K562 (cell line): ENCODE measurements at regions of chr6 and their contacts with region 1.

Region 1: GRCh38 chr6:30678964-30679726 is 6.3 kb upstream of the DHX16 start:
- DNase-seq: peak; percentile 81 to 95 (median 87)
- ATAC-seq: peak; percentile 79
- H3K4me3 ChIP-seq: peak overlapping the region; percentile 1; the same call in 1 of the 2 replicates
- H3K27ac ChIP-seq: no peak overlapping the region
- H3K4me1 ChIP-seq: peaks cover 29 to 48% of the 10 kb centered on the region in 2 experiments
- H3K27me3 ChIP-seq: no peaks in the 10 kb centered on the region
- CTCF ChIP-seq: peak; percentile 97 to 99 (median 98)
- EP300 ChIP-seq: peak; percentile 30; the same call in 1 of the 2 replicates
- POLR2A ChIP-seq: no peak
- RAD21 ChIP-seq: peak; percentile 98 to 99

Region 2: GRCh38 chr6:30730601-30731435 is 51.7 kb after region 1 on chr6:
- CTCF ChIA-PET with region 1: interaction called, 6 read pairs
- POLR2A ChIA-PET with region 1: interaction called, 24 read pairs
- in situ Hi-C with region 1: loop called (anchors 10 kb)
- intact Hi-C with region 1: loop called (anchors 2 kb)
- DNase-seq: peak; percentile 79 to 86 (median 84)
- ATAC-seq: peak; percentile 90
- H3K4me3 ChIP-seq: no peak overlapping the region
- H3K27ac ChIP-seq: 0 out of 3 replicates have a peak overlapping the region, but pooled peaks have one; percentile 18
- H3K4me1 ChIP-seq: peaks cover 0 to 7% of the 10 kb centered on the region in 2 experiments; a peak in 3 of 5 replicates
- H3K27me3 ChIP-seq: no peaks in the 10 kb centered on the region
- CTCF ChIP-seq: peak; percentile 88 to 95 (median 90)
- EP300 ChIP-seq: no peak
- POLR2A ChIP-seq: no peak; the same call in 1 of the 2 replicates
- RAD21 ChIP-seq: peak; percentile 69 to 90

Region 3: DNA sequence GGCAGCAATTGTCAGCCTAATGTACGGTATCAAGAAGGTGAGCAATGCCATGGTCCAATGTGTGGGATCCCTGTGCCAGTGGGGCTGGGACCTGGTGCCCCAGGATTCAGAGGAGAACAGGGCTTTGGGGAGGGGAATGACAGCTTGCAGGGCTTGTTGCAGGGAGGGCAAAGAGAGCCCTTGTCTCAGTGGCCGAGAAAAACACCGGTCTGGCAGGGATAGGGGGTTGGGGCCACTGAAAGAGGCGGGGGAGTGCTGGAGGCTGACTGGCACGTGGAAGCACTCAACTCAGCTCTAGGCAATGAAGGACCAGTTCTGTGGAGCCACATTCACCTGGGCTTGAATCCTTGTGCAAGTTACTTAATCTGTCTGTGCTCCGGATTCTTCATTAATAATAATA is 258.1 kb after region 1 on chr6:
- CTCF ChIA-PET with region 1: no interaction called
- POLR2A ChIA-PET with region 1: no interaction called
- in situ Hi-C with region 1: no loop called
- intact Hi-C with region 1: no loop called
- DNase-seq: no peak
- ATAC-seq: no peak
- H3K4me3 ChIP-seq: no peak overlapping the region
- H3K27ac ChIP-seq: no peak overlapping the region
- H3K4me1 ChIP-seq: peaks cover 8 to 11% of the 10 kb centered on the region in 2 experiments
- H3K27me3 ChIP-seq: peaks cover 29 to 54% of the 10 kb centered on the region in 2 experiments
- CTCF ChIP-seq: no peak
- EP300 ChIP-seq: no peak
- POLR2A ChIP-seq: no peak
- RAD21 ChIP-seq: no peak